ENCODE measurements at regions of chr12 and their contacts with region 1.

Region 1: DNA sequence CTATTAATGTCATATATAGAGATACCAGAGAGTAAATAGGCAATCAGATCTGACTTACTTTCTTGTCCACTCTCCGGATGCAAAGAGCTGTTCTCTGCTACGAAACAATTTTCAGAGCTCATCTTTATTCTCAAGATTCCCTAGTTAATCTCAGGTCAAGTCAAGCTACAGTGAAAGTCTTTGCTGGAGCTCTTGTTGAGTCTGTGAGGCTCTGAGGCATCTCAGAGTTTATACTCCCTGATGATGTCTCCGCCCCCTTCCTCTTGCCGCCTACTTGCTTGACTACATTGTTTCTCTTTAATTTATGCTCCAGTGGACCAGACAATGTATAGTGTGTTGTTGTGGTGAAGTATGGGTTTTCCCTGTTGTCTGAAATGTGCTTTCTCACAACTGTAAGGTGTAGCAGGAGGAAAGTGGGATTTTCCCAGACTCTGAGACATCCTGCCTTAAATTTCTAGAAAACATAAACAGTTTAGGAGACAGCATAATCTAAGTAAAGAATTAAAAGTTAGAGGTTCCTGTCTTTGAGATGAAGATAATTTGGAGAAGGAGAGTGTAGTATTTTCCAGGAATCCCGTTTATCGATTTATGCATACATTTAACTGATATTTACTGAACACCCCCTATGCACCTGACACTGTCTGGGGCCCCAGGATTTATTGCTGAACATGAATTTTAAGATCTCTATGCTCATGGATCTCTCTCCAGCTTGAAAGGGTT is at the start of gene CD69:
- DNase-seq: peak; percentile 92
- ATAC-seq: peak; percentile 60
- H3K4me3 Mint-ChIP-seq: peak within 1 kb of the TSS; percentile 92
- H3K27ac Mint-ChIP-seq: peak within 1 kb of the TSS; percentile 94
- H3K4me1 Mint-ChIP-seq: peaks cover 39% of the 10 kb centered on the region
- H3K27me3 Mint-ChIP-seq: no peaks in the 10 kb centered on the region
- total RNA-seq, gene CD69: 115 to 116 TPM

Region 2: DNA sequence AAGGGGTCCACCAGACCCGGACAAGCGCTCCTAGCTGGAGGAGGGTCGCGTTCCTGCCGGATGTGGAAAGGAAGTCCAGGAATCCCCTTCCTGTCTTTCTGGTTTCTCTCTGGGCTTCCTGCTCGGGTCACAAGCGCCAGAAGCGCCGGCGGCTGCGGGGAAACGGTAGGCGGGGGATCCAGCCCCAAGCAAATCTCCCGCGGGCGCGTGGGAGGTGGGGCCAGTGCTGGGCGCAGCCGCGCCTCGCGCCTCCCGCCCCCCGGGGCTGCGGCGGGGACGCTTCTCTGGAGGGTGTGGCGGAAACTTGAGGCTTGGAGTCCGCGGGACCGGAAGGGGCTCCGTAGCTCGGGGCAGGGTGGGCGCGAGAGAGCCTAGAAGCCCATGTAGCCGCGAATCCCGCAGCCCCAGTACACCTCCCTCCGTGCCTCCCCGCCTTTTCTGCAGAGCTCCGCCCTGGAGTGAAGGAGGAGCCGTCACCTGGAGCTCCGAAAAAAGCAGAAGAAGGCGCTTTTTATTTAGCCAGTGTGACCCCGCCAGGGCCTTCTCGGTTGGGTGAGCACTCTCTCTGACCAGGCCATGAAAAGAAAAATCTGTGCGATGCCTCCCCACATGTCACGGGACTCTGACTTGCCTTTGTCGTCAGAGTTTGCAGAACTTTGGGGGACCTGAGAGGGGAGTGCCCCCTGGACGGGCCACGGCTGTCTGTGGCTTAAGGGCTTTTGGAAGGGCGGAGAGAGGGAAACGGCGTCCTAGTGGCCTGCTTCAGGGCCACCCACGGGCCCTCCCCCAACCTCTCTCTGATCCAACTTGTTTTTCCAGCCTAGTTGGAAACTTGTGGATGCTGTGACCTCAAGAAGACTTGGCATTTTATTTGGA is 112.8 kb before region 1 on chr12:
- CTCF ChIA-PET with region 1: interaction called, 3 read pairs
- POLR2A ChIA-PET with region 1: interaction called, 103 read pairs
- DNase-seq: peak; percentile 97
- ATAC-seq: peak; percentile 83
- H3K4me3 Mint-ChIP-seq: peak overlapping the region; percentile 88
- H3K27ac Mint-ChIP-seq: peak overlapping the region; percentile 100
- H3K4me1 Mint-ChIP-seq: peaks cover 56% of the 10 kb centered on the region
- H3K27me3 Mint-ChIP-seq: peaks cover 2% of the 10 kb centered on the region

Region 3: DNA sequence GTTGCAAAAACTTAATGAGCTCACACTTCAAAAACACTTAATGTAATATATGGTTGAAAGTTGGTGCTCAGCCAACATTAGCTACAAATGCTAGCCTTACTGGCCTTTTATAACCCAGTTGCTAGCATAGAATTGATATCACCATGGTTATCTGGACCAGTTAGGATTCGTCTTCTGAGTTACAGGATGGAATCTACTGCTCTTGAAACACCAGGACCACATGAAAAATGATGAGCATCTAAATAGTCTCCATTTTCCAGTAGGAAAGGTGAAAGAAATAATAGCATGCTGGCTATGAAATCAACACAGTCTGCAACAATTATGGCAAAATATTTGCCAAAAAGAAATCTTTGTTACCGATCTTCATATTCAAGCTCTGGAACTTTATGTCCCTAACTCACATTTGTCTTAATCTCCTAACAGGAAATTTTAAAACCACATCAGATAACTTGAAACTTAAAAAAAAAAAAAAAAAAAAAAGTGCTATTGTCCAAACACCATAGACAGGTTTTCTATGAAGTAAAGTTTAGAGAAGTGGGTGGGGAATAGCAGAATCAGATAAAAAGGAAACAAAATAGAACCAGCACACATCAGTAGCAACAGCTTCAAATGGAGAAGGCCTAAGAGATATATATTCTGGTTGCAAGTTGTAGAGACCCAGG is 12.5 kb after region 1 on chr12:
- CTCF ChIA-PET with region 1: interaction called, 6 read pairs
- POLR2A ChIA-PET with region 1: interaction called, 55 read pairs
- DNase-seq: no peak
- ATAC-seq: peak; percentile 77
- H3K4me3 Mint-ChIP-seq: peak overlapping the region; percentile 65
- H3K27ac Mint-ChIP-seq: peak overlapping the region; percentile 69
- H3K4me1 Mint-ChIP-seq: peaks cover 87% of the 10 kb centered on the region
- H3K27me3 Mint-ChIP-seq: no peaks in the 10 kb centered on the region

Region 4: GRCh38 chr12:10385166-10385613 is 624.3 kb after region 1 on chr12:
- CTCF ChIA-PET with region 1: no interaction called
- POLR2A ChIA-PET with region 1: interaction called, 42 read pairs
- DNase-seq: no peak
- ATAC-seq: peak; percentile 35
- H3K4me3 Mint-ChIP-seq: peak overlapping the region; percentile 70
- H3K27ac Mint-ChIP-seq: peak overlapping the region; percentile 83
- H3K4me1 Mint-ChIP-seq: peaks cover 57% of the 10 kb centered on the region
- H3K27me3 Mint-ChIP-seq: no peaks in the 10 kb centered on the region

Region 5: DNA sequence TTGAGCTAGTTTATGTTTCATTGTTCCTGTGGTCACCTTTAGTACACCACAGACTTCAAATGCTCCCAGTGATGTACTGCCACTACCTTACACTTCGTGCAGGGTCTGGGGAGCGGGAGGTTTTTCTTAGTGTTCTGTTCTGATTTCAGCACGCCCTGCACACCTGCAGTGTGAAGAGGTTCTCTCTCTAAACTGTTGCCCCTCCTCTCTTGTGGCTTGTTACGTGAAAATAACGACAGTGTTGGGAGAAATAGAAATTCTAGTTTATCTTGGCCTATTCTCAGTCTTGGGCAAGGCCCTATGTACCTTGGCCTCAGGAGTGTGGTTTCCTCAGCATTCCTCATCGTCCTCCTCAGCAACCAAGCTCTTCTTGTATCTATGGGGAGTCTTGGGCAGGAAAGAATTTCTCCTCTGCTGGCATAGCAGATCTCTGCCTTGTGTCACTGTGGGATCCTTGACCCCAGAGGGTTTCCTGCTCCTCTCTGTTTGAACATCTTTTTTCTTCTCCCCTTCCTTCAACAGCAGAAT is 793.4 kb after region 1 on chr12:
- CTCF ChIA-PET with region 1: interaction called, 3 read pairs
- POLR2A ChIA-PET with region 1: interaction called, 20 read pairs
- DNase-seq: peak; percentile 77
- ATAC-seq: peak; percentile 58
- H3K4me3 Mint-ChIP-seq: peak overlapping the region; percentile 90
- H3K27ac Mint-ChIP-seq: peak overlapping the region; percentile 92
- H3K4me1 Mint-ChIP-seq: peaks cover 49% of the 10 kb centered on the region
- H3K27me3 Mint-ChIP-seq: no peaks in the 10 kb centered on the region

Measured in activated CD8-positive, alpha-beta T cell treated with anti-CD3 and anti-CD28 coated beads, Interleukin-2, amount 10 ng/mL, durations not matched to agents 7 days and 5 days (primary cell).